T-cell (primary cell): ENCODE measurements at regions of chr14 and their contacts with region 1.

Region 1: DNA sequence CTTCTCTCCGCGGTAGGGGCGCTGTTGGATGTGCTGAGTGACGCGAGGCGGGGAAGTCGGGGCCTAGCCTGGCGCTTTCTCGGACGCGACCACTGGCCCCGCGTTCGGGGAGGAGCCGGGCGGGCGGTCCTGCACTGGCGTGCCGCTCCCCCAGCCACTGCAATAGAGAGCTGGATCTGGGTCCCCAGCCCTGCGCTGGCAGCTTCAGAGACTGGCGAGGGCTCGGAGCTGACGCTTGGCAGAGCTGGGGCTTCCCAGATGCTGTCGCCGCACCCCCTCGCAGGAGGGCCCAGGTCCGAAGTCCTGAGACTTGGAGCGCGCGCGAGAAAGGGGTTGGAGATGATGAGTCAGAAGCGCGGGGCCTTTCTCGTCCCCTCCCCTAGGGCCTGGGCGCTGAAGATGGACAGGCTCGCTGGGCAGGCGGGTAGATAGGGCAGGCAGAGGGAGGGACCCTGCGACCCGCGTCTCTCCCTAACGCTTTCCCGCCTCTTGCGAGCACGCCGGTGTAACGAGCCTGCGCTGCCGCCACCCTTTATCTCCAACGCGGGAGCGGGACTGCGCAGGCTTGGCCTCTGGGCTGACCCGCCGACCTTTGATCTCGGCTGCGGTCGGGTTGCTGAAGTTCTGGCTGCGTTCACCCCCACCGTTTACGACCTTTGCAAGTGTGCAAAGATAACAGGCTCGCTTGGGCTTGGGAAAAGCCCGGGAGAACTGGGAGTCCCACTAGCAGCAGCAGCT is 3.0 kb downstream of the TMEM253 start:
- DNase-seq: peak; percentile 86 to 96 (median 92)
- ATAC-seq: peak; percentile 86 to 90 (median 88)
- H3K4me3 ChIP-seq: peak overlapping the region; percentile 82 to 84
- H3K4me3 Mint-ChIP-seq: peak overlapping the region; percentile 76 to 88 (median 82)
- H3K27ac ChIP-seq: peak overlapping the region; percentile 98
- H3K27ac Mint-ChIP-seq: peak overlapping the region; percentile 80 to 92
- H3K4me1 ChIP-seq: peaks cover 8 to 18% of the 10 kb centered on the region in 2 experiments
- H3K4me1 Mint-ChIP-seq: peaks cover 22 to 30% (median 29%) of the 10 kb centered on the region in 3 donors
- H3K27me3 ChIP-seq: peaks cover 0 to 9% of the 10 kb centered on the region in 2 experiments
- H3K27me3 Mint-ChIP-seq: peaks cover 0 to under 1% of the 10 kb centered on the region in 2 donors

Region 2: DNA sequence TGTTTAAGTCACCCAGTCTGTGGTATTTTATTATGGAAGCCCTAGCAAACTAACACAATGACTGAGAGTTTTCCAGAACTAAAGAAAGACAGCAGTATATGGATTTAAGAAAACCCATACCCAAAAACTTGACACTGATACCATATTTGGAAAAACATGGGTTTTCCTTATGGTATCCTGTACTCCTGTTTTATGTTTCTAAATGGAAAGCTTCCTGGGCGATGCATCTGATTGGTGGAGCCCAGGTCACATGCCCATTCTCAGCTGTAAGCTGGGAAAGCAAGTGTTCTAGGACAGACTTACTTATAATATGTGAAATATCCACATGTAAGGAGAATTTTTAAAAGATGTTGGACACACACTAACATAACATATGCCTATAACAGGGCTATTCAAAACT is 424.0 kb before region 1 on chr14:
- CTCF ChIA-PET with region 1: no interaction called
- POLR2A ChIA-PET with region 1: no interaction called
- DNase-seq: peak in 3 of 35 experiments; percentile 13 to 47 (median 16)
- ATAC-seq: no peak
- H3K4me3 ChIP-seq: no peak overlapping the region
- H3K4me3 Mint-ChIP-seq: no peak overlapping the region
- H3K27ac ChIP-seq: no peak overlapping the region
- H3K27ac Mint-ChIP-seq: peak overlapping the region in 1 of 2 donors; percentile 66
- H3K4me1 ChIP-seq: peaks cover 17 to 45% of the 10 kb centered on the region in 2 experiments
- H3K4me1 Mint-ChIP-seq: peaks cover 4 to 23% (median 5%) of the 10 kb centered on the region in 3 donors
- H3K27me3 ChIP-seq: no peaks in the 10 kb centered on the region
- H3K27me3 Mint-ChIP-seq: no peaks in the 10 kb centered on the region

Region 3: DNA sequence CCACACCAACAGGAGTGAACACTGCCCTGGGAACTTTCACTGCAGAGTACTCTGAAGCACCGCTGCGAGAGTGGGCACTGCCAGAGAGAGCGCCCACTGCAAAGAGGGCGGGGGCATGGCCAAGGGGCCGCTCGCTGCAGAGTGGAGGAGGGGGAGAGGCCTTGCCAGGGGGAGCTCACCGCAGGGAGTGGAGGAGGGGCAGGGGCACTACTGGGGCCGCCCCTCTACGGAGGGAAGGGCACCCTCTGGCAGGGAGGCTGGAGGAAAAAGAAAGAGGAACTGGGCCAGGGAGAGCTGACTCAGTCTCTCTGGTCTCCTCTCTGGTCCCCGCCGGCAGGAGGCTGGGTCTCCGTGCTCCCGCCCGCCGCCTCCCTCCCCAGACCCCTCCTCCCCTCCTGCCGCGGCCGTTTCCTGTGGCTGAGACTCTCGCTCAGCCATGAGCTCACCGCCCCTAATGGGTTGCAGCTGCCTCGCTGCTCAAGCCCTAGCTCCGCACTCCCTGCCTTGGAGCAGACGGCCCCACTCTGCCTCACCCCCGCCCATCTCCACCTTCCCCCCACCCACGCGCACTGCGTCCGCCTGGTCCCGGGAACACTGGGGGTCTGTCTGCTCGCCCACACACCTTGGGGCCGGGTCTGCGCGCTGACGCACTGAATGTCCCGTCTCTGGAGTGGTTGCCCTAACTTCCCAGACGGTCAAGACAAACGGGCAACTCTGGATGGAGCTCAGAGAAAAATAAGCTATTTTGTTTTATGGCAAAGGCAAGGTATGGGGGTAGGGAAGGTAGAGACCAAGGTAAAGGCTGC is 32.5 kb before region 1 on chr14:
- CTCF ChIA-PET with region 1: interaction called, 8 to 67 read pairs
- POLR2A ChIA-PET with region 1: interaction called in 1 of 2 experiments, 4 read pairs
- DNase-seq: peak in 13 of 35 experiments; percentile 8 to 53 (median 30)
- ATAC-seq: peak; percentile 31 to 44 (median 40)
- H3K4me3 ChIP-seq: peak overlapping the region; percentile 46 to 63
- H3K4me3 Mint-ChIP-seq: peak overlapping the region; percentile 74 to 84 (median 76)
- H3K27ac ChIP-seq: no peak overlapping the region
- H3K27ac Mint-ChIP-seq: no peak overlapping the region
- H3K4me1 ChIP-seq: peaks cover 7 to 35% of the 10 kb centered on the region in 2 experiments
- H3K4me1 Mint-ChIP-seq: peaks cover 29 to 41% (median 38%) of the 10 kb centered on the region in 3 donors
- H3K27me3 ChIP-seq: peaks cover 7 to 68% of the 10 kb centered on the region in 2 experiments
- H3K27me3 Mint-ChIP-seq: peaks cover 54 to 64% of the 10 kb centered on the region in 2 donors

Region 4: DNA sequence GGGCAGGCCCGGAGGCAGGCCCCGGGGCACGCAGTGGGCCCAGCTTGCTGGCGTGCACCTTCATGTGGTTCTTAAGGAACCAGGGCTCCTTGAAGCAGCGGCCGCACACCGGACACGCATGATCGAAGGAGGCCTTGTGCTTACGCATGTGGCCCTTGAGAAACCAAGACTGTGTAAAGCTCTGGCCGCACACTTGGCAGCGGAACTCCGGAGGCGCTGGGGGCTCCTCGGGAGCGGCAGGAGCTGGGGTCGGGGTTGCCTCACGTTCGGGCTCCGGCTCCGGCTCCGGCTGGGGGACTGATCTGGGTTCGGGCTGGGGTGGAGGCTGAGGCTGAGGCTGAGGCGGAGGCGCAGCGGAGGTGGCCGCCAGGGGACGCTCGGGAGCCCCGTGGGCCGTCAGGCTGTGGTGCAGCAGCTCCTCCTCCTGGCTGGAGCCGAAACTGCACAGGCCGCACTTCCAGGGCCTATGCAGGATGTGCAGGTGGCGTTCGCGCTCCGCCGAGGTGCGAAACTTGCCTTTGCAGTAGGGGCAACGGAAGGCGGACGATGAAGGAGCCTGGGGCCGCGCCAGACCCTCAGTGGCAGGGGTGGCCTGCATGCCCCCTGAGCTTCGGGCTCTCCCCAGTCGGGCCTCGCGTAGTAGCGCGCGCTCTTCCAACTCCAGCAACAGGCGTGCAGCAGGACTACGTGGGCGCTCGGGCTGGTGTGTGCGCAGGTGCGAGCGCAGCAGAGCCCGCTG is 11.4 kb before region 1 on chr14:
- CTCF ChIA-PET with region 1: interaction called, 29 to 68 read pairs
- POLR2A ChIA-PET with region 1: interaction called, 3 to 6 read pairs
- DNase-seq: peak; percentile 72 to 97 (median 89)
- ATAC-seq: peak; percentile 58 to 95 (median 87)
- H3K4me3 ChIP-seq: no peak overlapping the region
- H3K4me3 Mint-ChIP-seq: no peak overlapping the region
- H3K27ac ChIP-seq: no peak overlapping the region
- H3K27ac Mint-ChIP-seq: no peak overlapping the region
- H3K4me1 ChIP-seq: peaks cover 3 to 27% of the 10 kb centered on the region in 2 experiments
- H3K4me1 Mint-ChIP-seq: peaks cover 22 to 34% (median 28%) of the 10 kb centered on the region in 3 donors
- H3K27me3 ChIP-seq: no peaks in the 10 kb centered on the region
- H3K27me3 Mint-ChIP-seq: no peaks in the 10 kb centered on the region

Region 5: DNA sequence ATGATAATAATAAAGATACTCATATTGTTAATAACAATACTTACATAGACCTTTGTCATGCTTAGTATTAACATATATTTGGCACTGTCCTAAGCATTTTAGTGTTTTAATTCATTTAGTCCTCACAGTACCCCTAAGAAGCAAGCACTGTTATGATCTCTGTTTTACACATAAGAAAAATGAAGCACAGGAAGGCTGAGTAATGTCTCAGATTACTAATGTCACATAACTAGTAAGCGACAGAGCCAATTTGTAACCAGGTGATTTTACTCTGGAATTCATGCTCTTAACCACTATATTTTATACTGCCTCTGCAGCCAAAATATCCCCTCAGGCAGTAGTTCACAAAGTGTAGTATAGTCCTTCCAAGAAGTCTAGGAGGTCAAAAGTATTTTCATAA is 17.2 kb after region 1 on chr14:
- CTCF ChIA-PET with region 1: no interaction called
- POLR2A ChIA-PET with region 1: no interaction called
- DNase-seq: no peak
- ATAC-seq: no peak
- H3K4me3 ChIP-seq: no peak overlapping the region
- H3K4me3 Mint-ChIP-seq: no peak overlapping the region
- H3K27ac ChIP-seq: no peak overlapping the region
- H3K27ac Mint-ChIP-seq: no peak overlapping the region
- H3K4me1 ChIP-seq: no peaks in the 10 kb centered on the region
- H3K4me1 Mint-ChIP-seq: no peaks in the 10 kb centered on the region
- H3K27me3 ChIP-seq: peaks cover 0 to 12% of the 10 kb centered on the region in 2 experiments
- H3K27me3 Mint-ChIP-seq: peaks cover 16 to 45% of the 10 kb centered on the region in 2 donors